HepG2 (cell line): ENCODE measurements at regions of chr2 and their contacts with region 1.

Region 1: DNA sequence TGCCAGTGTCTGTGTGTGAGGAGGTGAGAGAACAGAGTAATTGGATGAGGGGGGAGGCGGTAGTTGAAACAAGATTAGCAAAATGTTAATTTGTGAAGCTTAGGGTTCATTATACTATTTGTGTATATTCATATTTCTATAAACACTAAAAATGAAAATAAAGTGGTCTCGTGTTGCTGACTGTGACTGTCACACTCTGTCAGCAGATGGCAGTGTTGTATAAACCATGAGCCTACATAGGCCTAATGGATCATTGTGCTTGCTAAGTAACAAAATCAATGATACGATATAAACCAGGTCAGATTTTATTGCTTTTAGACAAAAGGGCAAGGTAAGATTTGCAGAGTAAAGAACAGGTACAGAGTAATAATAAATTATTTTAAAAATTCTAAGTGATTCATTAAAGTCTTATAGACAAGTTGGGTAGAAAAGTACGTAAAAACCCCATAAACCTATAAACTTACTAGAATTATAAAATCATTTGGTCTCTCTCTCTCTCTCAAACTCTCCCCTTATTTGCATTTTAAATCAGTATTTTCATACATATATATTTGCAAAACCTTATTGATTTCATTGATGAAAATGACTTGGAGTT is 182.7 kb downstream of the RPIA start:
- DNase-seq: peak; percentile 53
- ATAC-seq: peak; percentile 90
- H3K4me3 ChIP-seq: no peak overlapping the region
- H3K27ac ChIP-seq: no peak overlapping the region
- H3K4me1 ChIP-seq: no peaks in the 10 kb centered on the region
- H3K27me3 ChIP-seq: peaks cover 0 to 7% of the 10 kb centered on the region in 2 experiments; a peak in 2 of 5 replicates
- CTCF ChIP-seq: peak; percentile 80
- EP300 ChIP-seq: no peak
- POLR2A ChIP-seq: no peak
- RAD21 ChIP-seq: peak; percentile 59; the same call in 1 of the 2 replicates

Region 2: GRCh38 chr2:88845772-88846661 is 28.1 kb before region 1 on chr2:
- CTCF ChIA-PET with region 1: no interaction called
- POLR2A ChIA-PET with region 1: no interaction called
- in situ Hi-C with region 1: no loop called
- intact Hi-C with region 1: no loop called
- DNase-seq: no peak
- ATAC-seq: no peak
- H3K4me3 ChIP-seq: no peak overlapping the region
- H3K27ac ChIP-seq: no peak overlapping the region
- H3K4me1 ChIP-seq: no peaks in the 10 kb centered on the region
- H3K27me3 ChIP-seq: peaks cover 0 to 4% of the 10 kb centered on the region in 2 experiments; a peak in 3 of 5 replicates
- CTCF ChIP-seq: no peak
- EP300 ChIP-seq: no peak
- POLR2A ChIP-seq: no peak
- RAD21 ChIP-seq: no peak

Region 3: DNA sequence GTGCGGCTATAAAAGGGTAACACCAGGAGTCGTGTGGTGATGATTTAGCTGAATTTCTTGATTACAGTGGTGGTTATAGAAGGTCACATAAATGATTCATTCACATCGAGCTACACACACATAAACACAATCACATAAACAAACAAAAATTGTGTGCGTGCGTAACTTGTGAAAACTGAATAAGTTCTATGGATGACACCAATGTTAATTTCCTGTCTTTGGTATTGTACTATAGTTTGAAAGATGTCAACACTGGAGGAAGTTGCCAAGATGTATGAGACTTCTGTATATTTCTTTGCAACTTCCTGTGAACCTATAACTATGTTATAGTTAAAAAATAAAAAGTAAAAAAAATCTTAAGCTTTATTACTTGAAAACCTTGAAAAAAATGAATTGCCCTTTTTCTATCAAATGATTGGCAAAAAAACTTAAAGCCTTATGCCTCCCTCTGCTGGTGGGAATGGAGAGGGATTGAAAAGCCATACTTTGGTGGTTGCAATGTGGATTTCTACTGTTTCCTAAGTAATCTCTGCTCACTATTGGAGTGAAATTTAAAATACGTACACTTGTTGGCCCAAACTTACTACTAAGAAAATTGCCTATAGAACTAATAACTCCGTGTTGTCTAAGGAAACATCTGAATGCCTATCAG is 45.1 kb after region 1 on chr2:
- CTCF ChIA-PET with region 1: interaction called, 3 read pairs
- POLR2A ChIA-PET with region 1: no interaction called
- in situ Hi-C with region 1: no loop called
- intact Hi-C with region 1: loop called (anchors 1 kb)
- DNase-seq: peak; percentile 31
- ATAC-seq: peak; percentile 74
- H3K4me3 ChIP-seq: no peak overlapping the region
- H3K27ac ChIP-seq: no peak overlapping the region
- H3K4me1 ChIP-seq: no peaks in the 10 kb centered on the region
- H3K27me3 ChIP-seq: 0 out of 5 replicates have a peak, but pooled peaks cover 0 to 3% of the 10 kb centered on the region in 2 experiments
- CTCF ChIP-seq: peak; percentile 48
- EP300 ChIP-seq: no peak
- POLR2A ChIP-seq: no peak
- RAD21 ChIP-seq: no peak